Activated CD4-positive, alpha-beta T cell treated with anti-CD3 and anti-CD28 coated beads for 36 hours (primary cell): ENCODE measurements at regions of chr14 and their contacts with region 1.

Region 1: GRCh38 chr14:22918804-22919600 is at the start of gene RBM23:
- DNase-seq: peak; percentile 100
- ATAC-seq: peak; percentile 97
- H3K4me3 Mint-ChIP-seq: peak within 1 kb of the TSS; percentile 92
- H3K27ac Mint-ChIP-seq: peak within 1 kb of the TSS; percentile 99
- H3K4me1 Mint-ChIP-seq: peaks cover 40% of the 10 kb centered on the region
- H3K27me3 Mint-ChIP-seq: no peaks in the 10 kb centered on the region
- total RNA-seq, gene RBM23: 61.6 to 68.6 TPM

Region 2: GRCh38 chr14:22589096-22589839 is 329.7 kb before region 1 on chr14 and contains the start of gene DAD1:
- CTCF ChIA-PET with region 1: interaction called, 4 read pairs
- POLR2A ChIA-PET with region 1: interaction called, 3 read pairs
- intact Hi-C with region 1: loop called in 1 of 2 experiments (anchors 1 kb)
- DNase-seq: peak; percentile 100
- ATAC-seq: peak; percentile 84
- H3K4me3 Mint-ChIP-seq: peak within 1 kb of the TSS; percentile 93
- H3K27ac Mint-ChIP-seq: peak within 1 kb of the TSS; percentile 97
- H3K4me1 Mint-ChIP-seq: peaks cover 72% of the 10 kb centered on the region
- H3K27me3 Mint-ChIP-seq: peaks cover 1% of the 10 kb centered on the region
- total RNA-seq, gene DAD1: 265 to 302 TPM

Region 3: DNA sequence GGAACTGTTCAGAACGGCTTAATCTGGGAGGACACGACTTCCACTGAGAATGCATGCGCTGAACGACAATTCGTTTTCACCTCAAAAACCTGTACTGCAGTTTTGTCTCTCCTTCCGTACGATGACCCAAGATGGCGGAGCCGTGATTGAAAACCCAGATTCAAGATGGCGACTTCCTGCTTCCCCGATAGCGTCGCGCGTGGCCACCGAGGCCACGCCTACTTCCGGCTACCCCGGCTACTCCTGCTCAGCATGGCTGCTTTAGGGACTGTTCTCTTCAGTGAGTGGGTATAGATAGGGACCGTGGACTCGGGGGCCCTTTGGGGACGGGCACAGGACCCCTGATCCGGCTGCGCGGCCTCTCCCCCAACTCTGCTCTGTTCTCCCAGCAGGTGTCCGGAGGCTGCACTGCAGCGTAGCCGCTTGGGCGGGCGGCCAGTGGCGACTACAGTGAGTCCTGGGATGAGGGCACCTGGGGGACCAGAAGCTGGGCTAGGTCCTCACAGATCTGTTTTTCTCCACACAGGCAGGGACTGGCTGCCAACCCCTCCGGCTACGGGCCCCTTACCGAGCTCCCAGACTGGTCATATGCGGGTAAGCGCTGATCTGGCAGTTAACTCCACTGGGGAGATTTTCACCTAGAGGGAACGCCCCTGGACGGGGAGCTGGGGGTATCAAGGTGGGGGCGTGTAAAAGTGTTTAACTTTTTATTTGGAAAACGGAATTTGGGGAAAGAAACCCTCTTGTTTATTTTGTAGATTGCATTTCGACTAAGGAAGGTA is 89.2 kb before region 1 on chr14 and contains the start of gene MRPL52:
- CTCF ChIA-PET with region 1: no interaction called
- POLR2A ChIA-PET with region 1: no interaction called
- intact Hi-C with region 1: loop called (anchors 1 to 2 kb)
- DNase-seq: peak; percentile 94
- ATAC-seq: peak; percentile 92
- H3K4me3 Mint-ChIP-seq: peak within 1 kb of the TSS; percentile 82
- H3K27ac Mint-ChIP-seq: peak within 1 kb of the TSS; percentile 98
- H3K4me1 Mint-ChIP-seq: peaks cover 26% of the 10 kb centered on the region
- H3K27me3 Mint-ChIP-seq: no peaks in the 10 kb centered on the region
- total RNA-seq, gene MRPL52: 115 to 136 TPM

Region 4: GRCh38 chr14:22900081-22900799 is 18.8 kb before region 1 on chr14:
- CTCF ChIA-PET with region 1: interaction called, 13 read pairs
- POLR2A ChIA-PET with region 1: interaction called, 5 read pairs
- intact Hi-C with region 1: no loop called
- DNase-seq: peak; percentile 57
- ATAC-seq: peak; percentile 69
- H3K4me3 Mint-ChIP-seq: no peak overlapping the region
- H3K27ac Mint-ChIP-seq: peak overlapping the region; percentile 0
- H3K4me1 Mint-ChIP-seq: peaks cover 16% of the 10 kb centered on the region
- H3K27me3 Mint-ChIP-seq: no peaks in the 10 kb centered on the region

Region 5: GRCh38 chr14:22955702-22956569 is 36.9 kb after region 1 on chr14:
- CTCF ChIA-PET with region 1: interaction called, 3 read pairs
- POLR2A ChIA-PET with region 1: interaction called, 3 read pairs
- intact Hi-C with region 1: loop called (anchors 1 to 5 kb)
- DNase-seq: no peak
- ATAC-seq: no peak
- H3K4me3 Mint-ChIP-seq: peak overlapping the region; percentile 88
- H3K27ac Mint-ChIP-seq: peak overlapping the region; percentile 90
- H3K4me1 Mint-ChIP-seq: peaks cover 18% of the 10 kb centered on the region
- H3K27me3 Mint-ChIP-seq: no peaks in the 10 kb centered on the region

Region 6: DNA sequence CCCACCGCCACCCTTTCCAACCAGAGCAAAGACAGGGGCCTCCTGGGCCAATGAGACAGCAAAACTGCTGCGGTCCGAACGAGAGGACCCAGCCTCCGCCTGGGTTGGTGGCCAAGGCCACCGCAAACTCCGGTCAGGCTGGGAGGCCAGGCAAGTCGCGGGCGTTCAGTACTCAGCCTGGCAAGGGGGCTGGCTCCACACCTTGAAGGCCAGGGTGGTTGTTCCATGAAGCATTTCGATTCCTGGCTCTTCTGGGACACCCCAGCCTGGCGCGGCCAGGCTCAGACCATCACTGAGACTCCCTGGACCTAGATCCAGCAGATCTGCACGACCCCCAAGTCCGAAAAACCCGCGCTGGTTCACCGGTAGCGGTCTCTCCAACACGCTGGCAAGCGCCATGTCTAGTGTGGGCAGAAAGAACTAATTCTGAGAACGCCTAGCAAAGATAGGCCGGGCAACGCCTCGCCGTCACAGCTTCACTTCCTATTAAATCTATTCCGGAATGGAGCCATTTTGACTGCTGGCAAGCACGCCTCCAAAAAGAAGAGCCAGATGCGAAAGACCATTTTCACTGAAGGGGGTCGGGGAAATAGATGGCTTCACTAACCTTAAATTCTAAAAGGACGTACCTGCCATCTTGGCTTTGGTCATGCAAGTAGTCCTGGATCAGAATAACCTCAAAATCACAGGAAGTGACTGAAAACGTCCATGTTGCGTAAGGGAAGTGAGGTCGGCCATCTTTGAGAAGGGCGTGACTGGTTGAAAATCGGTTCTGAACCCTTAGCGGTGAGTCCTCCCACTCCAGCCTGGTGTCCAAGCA is 115.7 kb after region 1 on chr14 and contains the start of gene PSMB5:
- CTCF ChIA-PET with region 1: interaction called, 3 read pairs
- POLR2A ChIA-PET with region 1: no interaction called
- intact Hi-C with region 1: loop called in 1 of 2 experiments (anchors 1 kb)
- DNase-seq: peak; percentile 94
- ATAC-seq: peak; percentile 95
- H3K4me3 Mint-ChIP-seq: peak within 1 kb of the TSS; percentile 97
- H3K27ac Mint-ChIP-seq: peak within 1 kb of the TSS; percentile 97
- H3K4me1 Mint-ChIP-seq: peaks cover 36% of the 10 kb centered on the region
- H3K27me3 Mint-ChIP-seq: no peaks in the 10 kb centered on the region
- total RNA-seq, gene PSMB5: 104 to 129 TPM